Left ventricle myocardium superior (tissue), 1 donor: ENCODE measurements at regions of chr2 and their contacts with region 1.

Region 1: DNA sequence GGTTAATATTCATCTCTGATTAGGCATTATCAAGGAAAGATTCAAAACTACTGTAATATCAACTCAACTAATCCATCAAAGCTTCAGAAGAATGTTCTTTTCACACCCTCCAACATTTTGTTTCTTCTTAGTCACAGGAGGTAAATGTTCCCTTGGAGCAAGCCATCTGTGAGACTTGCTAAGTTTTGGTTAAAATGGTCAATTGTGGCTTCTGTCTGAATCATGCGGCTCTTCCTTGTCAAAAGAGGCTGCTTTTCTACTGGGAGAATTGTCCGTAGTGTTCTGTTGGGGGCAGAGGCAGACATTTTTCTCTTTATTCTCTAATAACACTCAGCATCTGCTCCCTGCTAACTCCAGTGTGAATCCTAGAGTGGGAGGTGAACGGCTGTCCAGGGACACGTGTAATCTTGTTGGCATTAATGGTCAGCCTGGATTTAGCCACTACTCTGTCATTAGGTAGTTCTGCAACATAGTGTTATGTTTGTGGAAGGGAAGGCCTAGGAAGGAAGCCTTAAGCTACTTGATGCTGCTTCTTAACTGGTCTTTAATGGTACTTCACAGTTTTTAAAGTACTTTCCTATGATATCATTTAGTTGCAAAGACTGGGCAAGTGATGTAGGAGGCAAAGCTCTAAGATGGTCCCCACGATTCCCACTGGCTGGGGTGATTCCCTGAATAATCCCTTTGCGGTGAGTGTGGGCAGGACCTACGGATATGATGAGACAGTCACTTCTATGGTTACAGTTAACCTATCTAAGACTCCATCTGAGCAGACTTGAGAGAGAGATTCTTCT is 22.6 kb upstream of the FAP start:
- DNase-seq: no peak
- ATAC-seq: peak; percentile 28

Region 2: GRCh38 chr2:162196638-162197037 is 69.2 kb before region 1 on chr2:
- intact Hi-C with region 1: loop called (anchors 2 kb)
- DNase-seq: no peak
- ATAC-seq: no peak

Region 3: DNA sequence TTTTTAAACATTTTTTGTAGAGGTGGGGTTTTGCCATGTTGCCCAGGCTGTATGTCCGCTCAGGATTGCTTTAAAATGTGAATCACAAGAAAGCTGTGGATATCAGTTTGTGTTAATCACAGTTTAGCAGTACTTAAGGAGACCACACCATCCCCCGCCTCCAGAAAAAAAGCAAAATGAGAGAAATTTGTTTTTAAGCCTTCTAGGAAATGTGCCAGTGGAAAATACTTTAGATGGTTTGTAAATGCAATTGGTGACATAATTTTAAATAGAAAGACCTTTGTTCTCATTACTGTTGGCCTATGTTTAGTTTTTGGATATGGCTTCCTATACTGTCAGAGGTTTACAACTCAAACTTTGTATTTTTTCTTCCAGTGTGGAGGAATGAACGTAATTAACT is 105.1 kb after region 1 on chr2:
- intact Hi-C with region 1: no loop called
- DNase-seq: no peak
- ATAC-seq: no peak